Activated CD4-positive, alpha-beta T cell treated with anti-CD3 and anti-CD28 coated beads, Interleukin-2, amount 10 ng/mL, durations not matched to agents 24 days and 14 days (primary cell): ENCODE measurements at regions of chr3 and their contacts with region 1.

Region 1: GRCh38 chr3:188697127-188697526 is 474.6 kb upstream of the TPRG1 start:
- DNase-seq: no peak
- H3K4me3 Mint-ChIP-seq: no peak overlapping the region
- H3K27ac Mint-ChIP-seq: peak overlapping the region; percentile 12
- H3K4me1 Mint-ChIP-seq: peaks cover 24% of the 10 kb centered on the region
- H3K27me3 Mint-ChIP-seq: peaks cover 3% of the 10 kb centered on the region

Region 2: GRCh38 chr3:187745201-187746058 is 951.7 kb before region 1 on chr3 and contains the start of gene BCL6:
- intact Hi-C with region 1: loop called (anchors 1 kb)
- DNase-seq: peak; percentile 97
- H3K4me3 Mint-ChIP-seq: peak within 1 kb of the TSS; percentile 98
- H3K27ac Mint-ChIP-seq: peak within 1 kb of the TSS; percentile 99
- H3K4me1 Mint-ChIP-seq: peaks cover 61% of the 10 kb centered on the region
- H3K27me3 Mint-ChIP-seq: no peaks in the 10 kb centered on the region
- total RNA-seq, gene BCL6: 41.7 and 51.7 TPM in 2 replicates

Region 3: GRCh38 chr3:188439080-188439479 is 258.0 kb before region 1 on chr3:
- intact Hi-C with region 1: no loop called
- DNase-seq: peak; percentile 79
- H3K4me3 Mint-ChIP-seq: peak overlapping the region; percentile 55
- H3K27ac Mint-ChIP-seq: peak overlapping the region; percentile 91
- H3K4me1 Mint-ChIP-seq: peaks cover 43% of the 10 kb centered on the region
- H3K27me3 Mint-ChIP-seq: no peaks in the 10 kb centered on the region

Region 4: DNA sequence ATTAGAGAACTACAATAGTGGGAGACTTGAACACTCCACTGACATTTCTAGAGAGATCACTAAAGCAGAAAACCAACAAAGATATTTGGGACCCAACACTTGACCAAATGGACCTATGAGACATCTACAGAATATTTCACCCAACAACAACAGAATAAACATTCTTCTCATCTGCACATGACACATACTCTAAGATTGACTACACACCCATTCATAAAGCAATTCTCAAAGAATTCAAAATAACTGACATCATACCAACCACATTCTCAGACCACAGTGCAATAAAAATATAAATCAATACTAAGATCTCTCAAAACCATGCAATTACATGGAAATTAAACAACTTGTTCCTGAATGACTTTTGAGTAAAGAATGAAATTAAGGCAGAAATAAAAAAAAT is 69.5 kb before region 1 on chr3:
- intact Hi-C with region 1: loop called (anchors 2 kb)
- DNase-seq: no peak
- H3K4me3 Mint-ChIP-seq: no peak overlapping the region
- H3K27ac Mint-ChIP-seq: no peak overlapping the region
- H3K4me1 Mint-ChIP-seq: peaks cover 7% of the 10 kb centered on the region
- H3K27me3 Mint-ChIP-seq: no peaks in the 10 kb centered on the region

Region 5: GRCh38 chr3:188720636-188721035 is 23.5 kb after region 1 on chr3:
- intact Hi-C with region 1: loop called (anchors 1 kb)
- DNase-seq: no peak
- H3K4me3 Mint-ChIP-seq: no peak overlapping the region
- H3K27ac Mint-ChIP-seq: no peak overlapping the region
- H3K4me1 Mint-ChIP-seq: peaks cover 13% of the 10 kb centered on the region
- H3K27me3 Mint-ChIP-seq: peaks cover 4% of the 10 kb centered on the region

Region 6: DNA sequence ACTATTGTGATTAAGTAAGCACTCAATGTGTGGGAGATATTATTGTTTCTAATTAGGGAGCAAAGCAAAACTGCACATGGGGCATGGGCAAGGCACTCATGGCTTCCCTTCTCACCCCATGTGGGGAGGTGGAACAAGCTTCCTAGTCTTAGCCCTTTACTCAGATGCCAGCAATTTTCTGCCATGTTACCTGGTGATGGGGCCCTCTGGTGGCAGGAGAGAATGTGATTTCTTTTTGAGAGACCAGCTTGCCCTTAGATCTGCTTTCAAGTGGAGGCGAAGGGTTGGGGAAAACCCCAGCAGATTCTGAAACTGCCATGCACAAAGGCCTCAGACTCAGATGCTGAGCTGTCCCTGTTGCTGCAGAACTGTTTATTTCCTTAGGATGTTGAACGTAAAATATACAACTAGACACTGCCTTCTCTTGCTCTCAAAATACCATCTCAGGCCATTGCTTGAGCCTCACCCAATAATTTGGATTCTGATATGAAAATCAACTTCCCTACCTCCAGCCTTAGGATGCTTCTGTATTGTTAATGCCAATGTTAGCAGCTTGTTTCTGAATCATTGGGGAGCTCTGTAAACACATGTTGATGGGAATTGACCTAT is 344.5 kb after region 1 on chr3:
- intact Hi-C with region 1: loop called (anchors 10 kb)
- DNase-seq: peak; percentile 94
- H3K4me3 Mint-ChIP-seq: peak overlapping the region; percentile 48
- H3K27ac Mint-ChIP-seq: peak overlapping the region; percentile 79
- H3K4me1 Mint-ChIP-seq: peaks cover 54% of the 10 kb centered on the region
- H3K27me3 Mint-ChIP-seq: no peaks in the 10 kb centered on the region